ENCODE measurements at regions of chr11 and their contacts with region 1.

Region 1: DNA sequence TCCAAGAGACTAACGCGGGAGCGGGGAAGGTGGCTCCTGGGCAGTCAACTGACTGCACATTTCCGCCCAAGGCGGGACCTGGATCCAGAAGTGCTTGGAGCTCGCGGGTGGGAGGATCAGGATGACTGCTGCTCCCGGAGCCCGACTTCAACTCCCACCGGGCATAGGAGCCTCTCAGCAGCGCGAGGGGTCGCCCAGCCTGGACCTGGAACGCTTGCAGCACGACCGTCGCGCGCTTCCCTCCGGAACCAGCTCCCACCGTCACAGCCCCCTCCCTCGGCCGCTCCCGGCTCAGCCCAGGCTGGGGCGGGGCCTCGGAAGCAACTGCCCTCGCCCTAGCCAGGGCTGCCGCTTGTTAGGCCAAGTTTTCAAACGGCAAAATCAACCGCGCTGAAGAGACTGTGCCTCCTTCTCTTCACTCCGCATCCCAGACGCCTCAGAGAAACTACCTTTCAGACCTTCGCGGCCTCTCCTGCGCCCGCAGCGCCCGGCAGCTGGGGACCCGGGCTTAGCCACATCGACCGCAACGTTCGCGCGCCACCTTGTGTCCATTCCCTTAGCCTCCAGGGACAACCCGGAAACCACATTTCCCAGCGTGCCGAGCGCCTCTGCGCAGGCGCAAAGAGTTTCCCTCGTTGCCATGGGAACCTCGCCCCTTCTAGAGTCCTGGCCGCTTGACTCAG is 14.0 kb downstream of the SSH3 start:
- DNase-seq: peak; percentile 99
- ATAC-seq: peak; percentile 77
- H3K4me3 Mint-ChIP-seq: peak overlapping the region; percentile 98
- H3K27ac Mint-ChIP-seq: peak overlapping the region; percentile 99
- H3K4me1 Mint-ChIP-seq: peaks cover 32% of the 10 kb centered on the region
- H3K27me3 Mint-ChIP-seq: peaks cover 9% of the 10 kb centered on the region

Region 2: GRCh38 chr11:67239783-67240575 is 77.4 kb before region 1 on chr11:
- POLR2A ChIA-PET with region 1: interaction called, 14 read pairs
- DNase-seq: peak; percentile 87
- ATAC-seq: peak; percentile 96
- H3K4me3 Mint-ChIP-seq: peak overlapping the region; percentile 92
- H3K27ac Mint-ChIP-seq: peak overlapping the region; percentile 94
- H3K4me1 Mint-ChIP-seq: peaks cover 38% of the 10 kb centered on the region
- H3K27me3 Mint-ChIP-seq: no peaks in the 10 kb centered on the region

Region 3: GRCh38 chr11:67277231-67277961 is 40.0 kb before region 1 on chr11:
- POLR2A ChIA-PET with region 1: interaction called, 23 read pairs
- DNase-seq: peak; percentile 90
- ATAC-seq: peak; percentile 87
- H3K4me3 Mint-ChIP-seq: peak overlapping the region; percentile 82
- H3K27ac Mint-ChIP-seq: peak overlapping the region; percentile 97
- H3K4me1 Mint-ChIP-seq: peaks cover 45% of the 10 kb centered on the region
- H3K27me3 Mint-ChIP-seq: no peaks in the 10 kb centered on the region

Region 4: DNA sequence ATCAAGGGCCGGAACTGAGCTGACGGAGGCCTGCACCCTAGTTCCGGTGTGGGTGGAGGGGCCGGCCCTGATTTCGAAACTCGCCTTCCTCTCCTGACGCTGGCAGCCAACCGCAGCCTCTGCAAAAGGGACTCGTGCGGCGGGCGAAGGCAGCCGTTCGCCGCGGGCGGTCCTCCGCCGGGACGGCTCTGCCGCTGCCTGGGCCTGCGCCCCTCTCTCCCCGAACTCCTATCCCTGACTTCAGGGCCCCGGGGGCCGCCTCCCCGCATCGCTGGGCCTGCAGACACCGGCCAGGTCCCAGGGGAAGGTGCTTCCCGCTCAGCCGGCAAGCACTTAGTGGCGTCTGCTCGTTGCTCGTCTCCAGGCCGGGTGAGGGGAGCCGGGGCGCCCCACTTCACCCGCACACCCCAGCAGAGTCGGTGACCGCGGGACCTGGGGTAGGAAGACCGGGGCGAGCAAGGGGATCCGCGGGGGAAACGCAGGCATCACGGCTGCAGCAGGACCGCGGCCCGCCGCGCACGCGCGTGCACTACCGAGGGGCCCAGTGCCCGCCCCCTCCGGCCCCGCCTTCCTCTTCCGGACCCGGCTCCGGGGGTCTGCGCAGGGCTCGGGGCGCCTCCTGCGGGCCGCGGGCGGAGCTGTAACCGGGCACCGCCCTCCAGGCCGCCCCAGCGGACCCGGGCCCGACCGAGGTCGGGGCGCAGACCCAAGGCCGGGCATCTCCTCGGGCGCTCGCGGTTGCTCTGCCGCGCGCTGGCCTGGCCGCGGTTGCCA is 28.7 kb before region 1 on chr11:
- POLR2A ChIA-PET with region 1: interaction called, 35 read pairs
- DNase-seq: peak; percentile 96
- ATAC-seq: peak; percentile 68
- H3K4me3 Mint-ChIP-seq: peak overlapping the region; percentile 79
- H3K27ac Mint-ChIP-seq: peak overlapping the region; percentile 96
- H3K4me1 Mint-ChIP-seq: peaks cover 40% of the 10 kb centered on the region
- H3K27me3 Mint-ChIP-seq: no peaks in the 10 kb centered on the region

Region 5: GRCh38 chr11:67303132-67303834 is 14.1 kb before region 1 on chr11 and contains the start of gene SSH3:
- POLR2A ChIA-PET with region 1: interaction called, 18 read pairs
- DNase-seq: peak; percentile 76
- ATAC-seq: peak; percentile 79
- H3K4me3 Mint-ChIP-seq: peak within 1 kb of the TSS; percentile 68
- H3K27ac Mint-ChIP-seq: peak within 1 kb of the TSS; percentile 75
- H3K4me1 Mint-ChIP-seq: peaks cover 8% of the 10 kb centered on the region
- H3K27me3 Mint-ChIP-seq: no peaks in the 10 kb centered on the region
- total RNA-seq, gene SSH3: 24.6 to 27.0 TPM

Region 6: DNA sequence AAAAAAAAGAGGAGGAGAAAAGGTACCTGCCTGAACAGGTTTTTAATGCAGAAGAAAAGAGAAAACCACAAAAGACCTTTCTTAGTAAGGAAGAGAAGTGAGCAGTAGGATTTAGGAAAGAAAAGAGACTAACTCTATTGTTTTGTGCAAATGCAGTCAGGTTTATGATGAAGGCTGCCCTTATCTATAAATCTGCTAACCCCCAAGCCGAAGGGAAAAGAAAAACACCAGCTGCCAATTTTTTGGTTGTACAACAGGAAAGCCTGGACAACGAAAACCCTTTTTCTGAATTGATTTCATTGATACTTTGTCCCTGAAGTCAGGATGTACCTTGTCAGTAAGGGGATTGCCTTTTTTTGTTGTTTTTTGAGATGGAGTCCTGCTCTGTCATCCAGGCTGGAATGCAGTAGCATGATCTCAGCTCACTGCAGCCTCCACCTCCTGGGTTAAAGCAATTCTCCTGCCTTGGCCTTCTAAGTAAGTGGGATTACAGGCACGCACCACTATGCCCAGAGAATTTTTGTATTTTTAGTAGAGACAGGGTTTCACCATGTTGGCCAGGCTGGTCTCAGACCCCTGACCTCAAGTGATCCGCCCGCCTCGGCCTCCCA is 14.8 kb after region 1 on chr11:
- POLR2A ChIA-PET with region 1: no interaction called
- DNase-seq: no peak
- ATAC-seq: no peak
- H3K4me3 Mint-ChIP-seq: no peak overlapping the region
- H3K27ac Mint-ChIP-seq: no peak overlapping the region
- H3K4me1 Mint-ChIP-seq: no peaks in the 10 kb centered on the region
- H3K27me3 Mint-ChIP-seq: no peaks in the 10 kb centered on the region

Region 7: GRCh38 chr11:67420646-67421420 is 103.5 kb after region 1 on chr11:
- POLR2A ChIA-PET with region 1: no interaction called
- DNase-seq: peak; percentile 100
- ATAC-seq: peak; percentile 75
- H3K4me3 Mint-ChIP-seq: peak overlapping the region; percentile 84
- H3K27ac Mint-ChIP-seq: peak overlapping the region; percentile 90
- H3K4me1 Mint-ChIP-seq: peaks cover 43% of the 10 kb centered on the region
- H3K27me3 Mint-ChIP-seq: no peaks in the 10 kb centered on the region